CD4-positive, alpha-beta memory T cell (primary cell): ENCODE measurements at regions of chr19 and their contacts with region 1.

Region 1: DNA sequence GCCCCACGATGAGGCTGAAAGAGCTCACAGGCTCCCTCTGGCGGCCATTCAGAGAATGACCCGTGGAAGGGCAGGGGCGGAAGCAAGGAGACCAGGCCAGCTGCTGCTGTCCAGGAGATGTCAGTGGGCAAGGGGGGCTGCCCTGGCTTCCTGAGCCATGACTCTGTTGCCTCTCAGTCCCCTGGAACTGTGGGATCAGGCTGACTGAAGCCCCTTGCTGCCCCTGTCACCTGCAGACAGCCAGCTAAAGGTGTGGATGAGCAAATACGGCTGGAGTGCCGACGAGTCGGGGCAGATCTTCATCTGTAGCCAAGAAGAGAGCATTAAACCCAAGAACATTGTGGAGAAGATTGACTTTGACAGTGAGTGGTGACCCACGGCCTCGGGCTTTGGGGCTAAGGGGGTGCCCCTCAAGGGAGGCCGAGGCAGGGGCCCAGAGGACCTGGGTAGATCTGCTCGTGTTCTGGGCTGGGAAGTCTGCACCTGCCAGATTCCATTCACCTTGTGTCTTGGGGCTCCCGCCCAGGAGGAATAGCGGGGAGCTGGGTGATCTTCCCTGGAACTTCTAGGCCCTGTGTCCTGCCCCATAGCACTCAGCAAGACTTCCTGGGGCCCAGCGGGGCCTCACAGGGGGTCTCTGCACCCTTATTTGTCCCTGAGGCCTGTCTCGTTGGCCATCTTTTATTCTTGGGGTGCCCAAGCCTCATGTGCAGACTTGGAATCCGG is 12.5 kb upstream of the ACTN4 start:
- DNase-seq: peak; percentile 59 to 74 (median 68)
- H3K4me3 ChIP-seq: no peak overlapping the region
- H3K4me3 Mint-ChIP-seq: peak overlapping the region in 5 of 8 donors; percentile 32 to 70 (median 57)
- H3K27ac ChIP-seq: peak overlapping the region; percentile 23
- H3K27ac Mint-ChIP-seq: peak overlapping the region; percentile 82 to 92 (median 90)
- H3K4me1 ChIP-seq: peaks cover 32% of the 10 kb centered on the region
- H3K4me1 Mint-ChIP-seq: peaks cover 10 to 41% (median 27%) of the 10 kb centered on the region in 4 donors
- H3K27me3 ChIP-seq: no peaks in the 10 kb centered on the region
- H3K27me3 Mint-ChIP-seq: no peaks in the 10 kb centered on the region

Region 2: GRCh38 chr19:38370299-38370698 is 264.6 kb before region 1 on chr19:
- CTCF ChIA-PET with region 1: no interaction called
- POLR2A ChIA-PET with region 1: no interaction called
- intact Hi-C with region 1: no loop called
- DNase-seq: no peak
- H3K4me3 ChIP-seq: no peak overlapping the region
- H3K4me3 Mint-ChIP-seq: no peak overlapping the region
- H3K27ac ChIP-seq: no peak overlapping the region
- H3K27ac Mint-ChIP-seq: peak overlapping the region in 2 of 7 donors; percentile 22 to 41
- H3K4me1 ChIP-seq: peaks cover 9% of the 10 kb centered on the region
- H3K4me1 Mint-ChIP-seq: peaks cover 5 to 14% (median 10%) of the 10 kb centered on the region in 4 donors
- H3K27me3 ChIP-seq: no peaks in the 10 kb centered on the region
- H3K27me3 Mint-ChIP-seq: peaks cover 2 to 5% of the 10 kb centered on the region in 2 donors

Region 3: DNA sequence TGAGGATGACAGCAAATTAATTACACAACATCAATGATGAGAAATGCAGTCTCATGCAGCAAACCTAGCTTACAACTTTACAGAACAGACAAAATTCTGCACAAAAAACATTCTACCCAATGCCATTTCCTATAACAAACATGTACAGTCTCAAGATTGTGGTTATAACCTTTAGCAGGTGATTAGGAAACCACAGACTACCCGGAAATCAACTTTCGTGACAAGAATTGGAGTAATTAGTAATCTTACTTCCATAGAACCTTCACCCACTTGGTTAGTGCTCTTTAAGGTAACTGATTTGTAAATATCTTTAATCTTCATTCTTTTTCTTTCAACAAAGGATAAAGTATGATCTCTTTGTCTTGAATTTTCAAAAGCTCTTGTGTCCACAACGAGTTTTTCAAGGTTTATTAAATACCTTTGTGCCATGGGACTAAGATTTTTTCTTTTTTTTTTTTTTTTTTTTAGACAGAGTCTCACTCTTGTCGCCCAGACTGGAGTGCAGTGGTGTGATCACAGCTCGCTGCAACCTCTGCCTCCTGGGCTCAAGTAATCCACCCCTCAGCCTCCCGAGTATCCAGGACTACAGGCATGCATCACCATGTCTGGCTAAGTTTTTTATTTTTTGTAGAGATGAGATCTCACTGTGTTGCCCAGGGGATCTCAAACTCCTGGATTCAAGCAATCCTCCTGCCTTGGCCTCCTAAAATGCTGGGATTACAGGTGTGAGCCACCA is 96.0 kb before region 1 on chr19:
- CTCF ChIA-PET with region 1: interaction called, 57 read pairs
- POLR2A ChIA-PET with region 1: interaction called, 23 read pairs
- intact Hi-C with region 1: loop called (anchors 1 kb)
- DNase-seq: peak; percentile 66 to 81 (median 72)
- H3K4me3 ChIP-seq: peak overlapping the region in 1 of 2 donors; percentile 33
- H3K4me3 Mint-ChIP-seq: peak overlapping the region; percentile 43 to 82 (median 69)
- H3K27ac ChIP-seq: peak overlapping the region; percentile 12
- H3K27ac Mint-ChIP-seq: peak overlapping the region; percentile 82 to 95 (median 87)
- H3K4me1 ChIP-seq: peaks cover 44% of the 10 kb centered on the region
- H3K4me1 Mint-ChIP-seq: peaks cover 24 to 61% (median 41%) of the 10 kb centered on the region in 4 donors
- H3K27me3 ChIP-seq: no peaks in the 10 kb centered on the region
- H3K27me3 Mint-ChIP-seq: no peaks in the 10 kb centered on the region

Region 4: DNA sequence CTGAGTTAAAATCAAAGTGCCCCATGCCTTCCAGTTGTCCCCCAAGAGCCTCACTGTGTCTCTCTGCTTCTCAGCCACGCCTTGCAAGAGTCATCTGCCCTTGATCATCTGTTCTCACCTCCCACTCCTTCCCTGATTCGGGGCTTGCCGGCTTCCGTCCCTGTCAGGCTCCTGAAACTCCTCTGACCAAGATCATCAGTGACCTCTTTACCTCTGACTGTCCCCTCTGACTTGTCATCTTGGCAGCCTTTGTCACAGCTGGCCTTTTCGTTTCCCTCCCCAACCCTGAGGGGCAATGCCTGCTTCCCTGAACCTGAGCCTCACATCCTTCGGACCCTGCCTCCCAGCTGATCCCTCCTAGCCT is 83.5 kb before region 1 on chr19:
- CTCF ChIA-PET with region 1: interaction called, 18 read pairs
- POLR2A ChIA-PET with region 1: no interaction called
- intact Hi-C with region 1: loop called (anchors 5 kb)
- DNase-seq: no peak
- H3K4me3 ChIP-seq: no peak overlapping the region
- H3K4me3 Mint-ChIP-seq: peak overlapping the region in 6 of 8 donors; percentile 7 to 64 (median 29)
- H3K27ac ChIP-seq: no peak overlapping the region
- H3K27ac Mint-ChIP-seq: peak overlapping the region in 5 of 7 donors; percentile 38 to 74 (median 64)
- H3K4me1 ChIP-seq: peaks cover 25% of the 10 kb centered on the region
- H3K4me1 Mint-ChIP-seq: peaks cover 18 to 36% (median 23%) of the 10 kb centered on the region in 4 donors
- H3K27me3 ChIP-seq: no peaks in the 10 kb centered on the region
- H3K27me3 Mint-ChIP-seq: peaks cover 0 to 3% of the 10 kb centered on the region in 2 donors

Region 5: GRCh38 chr19:38618590-38619360 is 16.1 kb before region 1 on chr19 and contains the start of gene EIF3K:
- CTCF ChIA-PET with region 1: interaction called, 55 read pairs
- POLR2A ChIA-PET with region 1: interaction called, 12 read pairs
- intact Hi-C with region 1: loop called (anchors 1 kb)
- DNase-seq: peak; percentile 95 to 97 (median 96)
- H3K4me3 ChIP-seq: peak within 1 kb of the TSS; percentile 97 to 99
- H3K4me3 Mint-ChIP-seq: peak within 1 kb of the TSS; percentile 95 to 100 (median 100)
- H3K27ac ChIP-seq: peak within 1 kb of the TSS; percentile 90
- H3K27ac Mint-ChIP-seq: peak within 1 kb of the TSS; percentile 93 to 100 (median 99)
- H3K4me1 ChIP-seq: peaks cover 57% of the 10 kb centered on the region
- H3K4me1 Mint-ChIP-seq: peaks cover 28 to 60% (median 45%) of the 10 kb centered on the region in 4 donors
- H3K27me3 ChIP-seq: no peaks in the 10 kb centered on the region
- H3K27me3 Mint-ChIP-seq: no peaks in the 10 kb centered on the region
- total RNA-seq, gene EIF3K: 320 to 340 TPM

Region 6: DNA sequence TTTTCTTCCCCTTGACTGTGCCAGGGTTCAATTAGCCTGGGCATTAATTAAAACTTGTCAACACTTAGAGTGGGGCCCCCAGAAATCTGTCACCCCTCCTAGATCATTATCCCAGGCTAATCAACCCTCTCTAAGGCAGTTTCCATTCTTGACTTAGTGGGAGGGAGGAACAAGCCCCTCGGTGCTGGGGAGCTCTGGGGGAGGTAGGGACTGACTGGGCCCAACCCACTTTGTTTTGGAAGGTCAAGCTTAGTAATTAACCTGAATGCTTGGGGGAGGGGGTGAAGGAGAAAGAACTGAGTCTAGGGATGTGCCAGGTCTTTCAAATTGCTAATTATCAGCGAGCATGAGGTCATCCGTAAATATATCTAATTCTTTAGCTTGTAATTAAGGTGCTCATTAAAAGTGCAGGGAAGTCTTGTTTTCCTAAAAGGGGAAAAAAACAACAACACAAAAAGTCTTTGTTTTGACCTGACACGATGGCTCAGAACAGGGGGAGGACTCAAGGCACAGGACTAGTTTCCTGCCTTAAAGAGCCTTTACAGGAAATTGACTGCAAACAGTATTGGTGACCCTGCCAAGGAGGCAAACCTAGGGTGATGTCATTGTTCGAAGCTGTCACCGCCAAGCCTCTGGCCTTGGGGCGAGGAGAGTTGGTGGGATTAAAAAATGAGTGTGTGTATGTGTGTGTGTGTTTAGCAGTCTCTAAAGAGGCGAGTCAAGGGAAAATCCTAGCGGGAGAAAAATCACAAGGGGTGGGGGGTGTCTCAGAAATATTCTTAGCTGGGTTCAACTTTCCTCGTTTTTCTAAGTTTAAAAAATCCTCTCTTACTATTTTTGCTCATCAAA is 32.0 kb after region 1 on chr19:
- CTCF ChIA-PET with region 1: interaction called, 14 read pairs
- POLR2A ChIA-PET with region 1: interaction called, 3 read pairs
- intact Hi-C with region 1: no loop called
- DNase-seq: peak in 3 of 5 donors; percentile 33 to 66 (median 33)
- H3K4me3 ChIP-seq: no peak overlapping the region
- H3K4me3 Mint-ChIP-seq: peak overlapping the region; percentile 75 to 92 (median 82)
- H3K27ac ChIP-seq: peak overlapping the region; percentile 44
- H3K27ac Mint-ChIP-seq: peak overlapping the region; percentile 64 to 100 (median 95)
- H3K4me1 ChIP-seq: peaks cover 99% of the 10 kb centered on the region
- H3K4me1 Mint-ChIP-seq: peaks cover 56 to 100% (median 86%) of the 10 kb centered on the region in 4 donors
- H3K27me3 ChIP-seq: no peaks in the 10 kb centered on the region
- H3K27me3 Mint-ChIP-seq: no peaks in the 10 kb centered on the region

Region 7: DNA sequence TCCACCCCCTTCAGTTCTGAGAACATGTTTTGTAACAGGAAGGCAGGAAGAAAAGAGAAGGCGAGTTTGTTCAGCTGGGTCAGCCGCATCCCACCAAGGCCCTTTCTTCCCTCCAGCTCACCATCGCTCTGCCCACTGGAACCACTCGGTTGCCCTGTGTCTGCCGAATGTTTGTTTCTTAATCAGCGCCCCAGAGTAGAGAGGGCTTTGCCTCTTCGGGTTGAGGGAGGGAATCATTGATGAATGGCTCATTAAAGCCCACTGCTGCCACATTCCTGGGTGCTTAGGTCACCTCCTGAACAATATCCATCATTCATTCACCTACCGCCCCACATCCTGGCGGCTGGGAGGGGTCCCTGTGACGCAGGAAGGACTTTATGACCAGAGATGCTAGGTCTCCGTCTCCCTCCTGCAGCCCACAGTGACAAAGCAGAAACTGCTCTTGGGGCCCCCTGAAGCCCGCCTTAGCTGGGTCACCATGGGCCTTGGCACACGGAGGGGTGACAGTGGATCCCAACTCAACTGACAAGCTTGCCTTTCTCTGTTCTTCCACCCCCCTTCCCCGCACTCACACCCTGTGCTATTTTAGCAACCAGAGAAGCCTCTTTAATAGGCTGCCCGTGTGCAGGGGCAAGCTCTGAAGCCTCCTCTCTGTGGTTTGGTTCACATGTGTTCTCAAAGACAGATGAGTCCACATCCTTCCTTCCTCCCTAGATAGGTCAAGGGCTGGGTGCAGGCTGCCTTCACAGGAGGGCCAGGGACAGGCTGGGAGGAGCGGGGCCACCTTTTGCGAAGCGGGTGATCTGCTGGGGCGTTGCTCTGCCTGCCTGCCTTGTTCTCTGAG is 58.7 kb after region 1 on chr19:
- CTCF ChIA-PET with region 1: interaction called, 10 read pairs
- POLR2A ChIA-PET with region 1: interaction called, 4 read pairs
- intact Hi-C with region 1: no loop called
- DNase-seq: peak; percentile 56 to 69 (median 65)
- H3K4me3 ChIP-seq: peak overlapping the region in 1 of 2 donors; percentile 22
- H3K4me3 Mint-ChIP-seq: peak overlapping the region; percentile 65 to 82 (median 79)
- H3K27ac ChIP-seq: peak overlapping the region; percentile 32
- H3K27ac Mint-ChIP-seq: peak overlapping the region; percentile 81 to 92 (median 88)
- H3K4me1 ChIP-seq: peaks cover 98% of the 10 kb centered on the region
- H3K4me1 Mint-ChIP-seq: peaks cover 54 to 96% (median 77%) of the 10 kb centered on the region in 4 donors
- H3K27me3 ChIP-seq: no peaks in the 10 kb centered on the region
- H3K27me3 Mint-ChIP-seq: no peaks in the 10 kb centered on the region